Calu3 (cell line): ENCODE measurements at regions of chr4 and their contacts with region 1.

Region 1: DNA sequence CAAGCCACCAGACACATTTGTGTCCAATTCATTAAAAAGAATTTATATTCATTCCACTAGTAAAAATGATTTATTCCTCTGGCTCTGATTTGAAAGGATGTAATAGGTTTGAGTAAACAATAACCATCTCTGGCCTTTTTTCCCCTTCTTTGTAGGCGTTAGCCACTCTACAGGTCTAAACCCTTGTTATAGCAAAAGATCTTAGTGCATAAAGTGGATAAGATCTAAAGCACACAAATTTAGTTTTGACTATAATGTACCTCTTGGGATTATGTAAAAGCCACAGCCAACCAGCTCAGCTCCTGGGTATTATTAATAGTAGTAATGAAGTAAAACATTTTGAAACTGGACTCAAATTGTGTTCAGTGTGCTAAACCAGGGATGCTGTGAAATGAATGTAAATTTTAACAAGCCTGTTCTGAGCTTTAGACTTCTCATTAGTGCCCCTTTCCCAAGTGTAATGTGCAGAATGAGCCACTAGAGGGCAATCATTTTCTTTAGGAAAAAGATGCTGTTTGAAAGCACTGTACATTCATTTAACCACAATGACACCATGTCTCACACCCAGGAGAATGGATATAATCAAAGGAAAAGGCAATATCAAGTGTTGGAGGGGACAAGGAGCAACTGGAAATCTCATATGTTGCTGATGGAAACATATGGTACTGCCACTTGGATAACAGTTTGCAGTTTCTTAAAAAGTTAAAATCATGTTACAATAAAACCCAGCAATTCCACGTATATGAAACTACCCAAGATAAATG is 69.7 kb downstream of the KLHL8 start:
- DNase-seq: peak; percentile 48
- H3K4me3 Mint-ChIP-seq: no peak overlapping the region
- H3K27ac Mint-ChIP-seq: no peak overlapping the region
- H3K4me1 Mint-ChIP-seq: no peaks in the 10 kb centered on the region
- H3K27me3 Mint-ChIP-seq: no peaks in the 10 kb centered on the region
- CTCF ChIP-seq: peak; percentile 35

Region 2: GRCh38 chr4:87235020-87235671 is 84.5 kb after region 1 on chr4:
- CTCF ChIA-PET with region 1: interaction called, 5 read pairs
- intact Hi-C with region 1: loop called (anchors 1 kb)
- DNase-seq: no peak
- H3K4me3 Mint-ChIP-seq: peak overlapping the region; percentile 66
- H3K27ac Mint-ChIP-seq: no peak overlapping the region
- H3K4me1 Mint-ChIP-seq: peaks cover 7% of the 10 kb centered on the region
- H3K27me3 Mint-ChIP-seq: no peaks in the 10 kb centered on the region
- CTCF ChIP-seq: no peak

Region 3: GRCh38 chr4:87326460-87326859 is 175.8 kb after region 1 on chr4:
- CTCF ChIA-PET with region 1: no interaction called
- intact Hi-C with region 1: no loop called
- DNase-seq: no peak
- H3K4me3 Mint-ChIP-seq: no peak overlapping the region
- H3K27ac Mint-ChIP-seq: no peak overlapping the region
- H3K4me1 Mint-ChIP-seq: no peaks in the 10 kb centered on the region
- H3K27me3 Mint-ChIP-seq: no peaks in the 10 kb centered on the region
- CTCF ChIP-seq: no peak

Region 4: DNA sequence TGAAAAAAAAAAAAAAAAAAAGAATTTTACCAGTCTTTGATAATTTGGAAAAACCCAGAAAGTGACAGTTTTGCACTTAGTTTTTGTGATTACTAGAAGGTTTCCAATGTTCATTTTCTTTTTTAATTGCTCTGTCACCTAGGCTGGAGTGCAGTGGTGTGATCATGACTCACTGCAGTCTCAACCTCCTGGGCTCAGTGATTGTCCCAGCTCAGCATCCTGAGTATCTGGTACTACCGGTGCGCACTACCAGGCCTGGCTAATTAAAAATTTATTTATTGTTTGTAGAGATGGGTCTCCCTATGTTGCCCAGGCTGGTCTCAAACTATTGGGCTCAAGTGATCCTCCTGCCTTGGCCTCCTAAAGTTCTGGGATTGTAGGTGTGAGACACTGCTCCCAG is 275.0 kb after region 1 on chr4:
- CTCF ChIA-PET with region 1: no interaction called
- intact Hi-C with region 1: no loop called
- DNase-seq: no peak
- H3K4me3 Mint-ChIP-seq: no peak overlapping the region
- H3K27ac Mint-ChIP-seq: no peak overlapping the region
- H3K4me1 Mint-ChIP-seq: no peaks in the 10 kb centered on the region
- H3K27me3 Mint-ChIP-seq: no peaks in the 10 kb centered on the region
- CTCF ChIP-seq: no peak